Aorta (tissue), 5 donors: ENCODE measurements at regions of chr5 and their contacts with region 1.

Region 1: DNA sequence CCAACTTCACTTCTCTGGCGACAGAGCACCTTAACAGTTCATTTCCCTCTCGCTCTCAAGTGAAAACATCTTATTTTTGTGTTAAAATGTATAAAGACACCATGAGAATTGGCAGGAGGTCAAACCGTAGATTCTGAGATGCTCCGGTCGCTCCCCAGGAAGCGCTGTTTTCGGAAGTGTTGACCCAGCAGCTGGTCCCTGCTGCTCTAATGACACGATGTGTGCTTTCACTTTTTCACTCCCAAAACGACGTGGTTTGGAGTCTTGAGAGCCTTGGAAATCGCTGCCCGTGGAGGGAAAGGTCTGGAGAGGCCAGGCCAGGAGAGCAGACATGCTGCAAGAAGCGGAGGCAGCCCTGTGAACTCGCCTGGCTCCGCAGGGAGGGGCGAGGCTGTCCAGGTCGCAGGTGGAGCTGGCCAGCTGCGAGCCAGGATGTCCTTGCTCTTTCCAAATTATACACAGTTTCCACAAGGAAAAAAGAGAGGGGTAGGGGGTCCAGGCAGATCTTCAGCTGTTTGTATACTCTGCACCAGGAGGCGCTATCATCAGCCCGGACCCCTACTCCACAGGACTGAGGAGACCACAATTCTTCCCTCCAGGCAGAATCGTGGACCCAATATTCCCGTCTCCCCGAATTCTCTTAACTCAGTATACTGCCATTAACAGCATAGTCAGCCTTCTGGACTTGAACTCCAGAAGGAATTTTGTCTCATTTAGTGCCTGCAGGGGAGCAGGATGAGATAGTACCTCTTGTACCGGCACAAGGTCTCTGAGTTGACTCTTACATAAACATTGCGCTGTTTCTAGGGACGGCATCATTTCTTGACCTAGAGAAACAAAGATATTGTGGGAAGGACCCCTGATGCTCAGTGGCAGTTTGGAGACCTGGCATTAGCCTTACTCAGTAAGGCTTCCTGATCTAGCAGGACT is 248.6 kb upstream of the ANKRD55 start:
- DNase-seq: peak in 1 of 2 donors; percentile 71
- ATAC-seq: peak; percentile 26
- H3K4me3 ChIP-seq: peak overlapping the region; percentile 66 to 71
- H3K27ac ChIP-seq: peak overlapping the region; percentile 69 to 94
- H3K4me1 ChIP-seq: peaks cover 0 to 3% of the 10 kb centered on the region in 2 donors
- H3K27me3 ChIP-seq: no peaks in the 10 kb centered on the region

Region 2: DNA sequence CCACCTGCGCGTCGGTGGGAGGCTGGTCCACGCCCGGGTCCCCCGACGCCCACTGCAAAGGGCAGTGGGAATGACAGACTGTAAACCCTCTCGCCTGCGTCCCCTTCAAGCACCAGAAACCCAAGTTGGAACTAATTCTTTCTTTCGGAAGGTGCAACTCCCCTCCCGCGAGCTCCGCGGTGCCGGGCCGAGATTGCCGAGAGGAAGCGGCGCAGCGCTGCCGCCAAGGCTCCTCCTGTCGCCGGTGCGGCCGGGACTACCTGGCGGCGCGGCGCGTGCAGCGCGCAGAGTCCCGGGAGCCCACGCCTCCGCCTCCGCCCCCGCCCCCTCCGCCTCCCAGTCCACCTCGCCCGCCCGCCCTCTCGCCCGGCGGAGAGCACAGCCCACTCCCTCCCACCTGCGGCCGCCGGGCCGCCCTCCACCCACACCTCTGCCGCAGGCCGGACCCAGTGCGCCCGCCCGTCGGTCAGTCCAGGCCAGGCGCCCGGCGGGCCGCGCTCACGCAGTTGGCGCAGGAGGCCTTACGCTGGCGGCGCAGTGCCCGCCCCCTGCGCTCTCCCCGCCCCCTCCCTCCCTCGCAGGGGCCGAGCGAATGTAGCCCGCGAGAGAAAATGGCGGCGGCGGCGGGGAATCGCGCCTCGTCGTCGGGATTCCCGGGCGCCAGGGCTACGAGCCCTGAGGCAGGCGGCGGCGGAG is 333.4 kb after region 1 on chr5 and contains the start of gene MAP3K1:
- intact Hi-C with region 1: loop called in 1 of 2 experiments (anchors 10 kb)
- DNase-seq: peak; percentile 87 to 93
- ATAC-seq: peak; percentile 94
- H3K4me3 ChIP-seq: peak within 1 kb of the TSS; percentile 90 to 97
- H3K27ac ChIP-seq: peak within 1 kb of the TSS; percentile 8 to 79
- H3K4me1 ChIP-seq: no peaks in the 10 kb centered on the region
- H3K27me3 ChIP-seq: no peaks in the 10 kb centered on the region
- total RNA-seq, gene MAP3K1: 11.2 to 26.3 TPM